ENCODE measurements at regions of chr17 and their contacts with region 1.

Region 1: DNA sequence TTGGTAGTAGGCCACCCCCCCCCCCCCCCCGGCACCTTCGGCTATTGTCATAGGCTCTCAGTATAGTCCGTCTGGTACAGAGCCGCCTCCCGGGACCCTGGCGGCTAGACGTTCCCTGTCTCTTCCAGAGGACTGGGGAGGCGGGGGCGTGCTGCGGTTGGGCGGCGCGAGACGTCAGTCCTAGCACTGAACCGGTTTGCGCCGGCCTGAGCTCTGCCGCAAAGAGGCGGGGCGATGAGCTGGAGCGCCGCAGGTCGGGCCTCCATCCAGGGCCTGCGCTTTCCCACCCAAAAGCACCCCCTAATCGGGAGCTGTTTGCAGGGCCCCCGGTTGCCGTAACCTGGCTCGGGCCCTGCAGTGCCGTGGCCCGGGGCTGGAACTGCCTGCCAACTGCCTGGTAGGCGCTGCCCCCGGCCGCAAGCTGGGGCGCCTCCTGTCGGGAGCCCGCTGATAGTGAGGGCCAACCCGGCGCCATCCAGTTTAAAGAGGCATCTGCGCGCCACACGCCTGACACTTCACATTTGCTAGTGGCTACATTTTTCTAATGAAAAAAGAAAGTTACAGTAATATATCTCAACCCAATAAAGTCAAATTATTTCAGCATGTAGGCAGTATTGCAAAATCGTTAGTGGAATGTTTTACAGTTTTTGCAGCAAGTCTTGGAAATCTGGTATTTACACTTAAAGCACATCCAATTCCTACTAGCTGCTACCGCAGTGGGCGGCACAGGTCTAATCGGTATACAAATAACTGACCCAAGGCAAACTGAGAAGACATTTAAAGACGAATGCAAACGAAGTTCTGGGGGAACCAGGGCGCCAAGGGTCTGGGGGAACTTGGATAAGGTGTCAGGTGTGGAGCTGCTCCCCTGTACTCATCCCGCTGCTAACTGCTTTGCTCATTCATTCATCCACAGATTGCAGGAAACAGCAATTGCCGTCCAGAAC is 748 bp upstream of the USP22 start:
- DNase-seq: peak; percentile 96 to 99 (median 99)
- H3K4me3 ChIP-seq: peak overlapping the region; percentile 43 to 99 (median 80)
- H3K27ac ChIP-seq: peak overlapping the region; percentile 96 to 100 (median 100)
- H3K27me3 ChIP-seq: no peaks in the 10 kb centered on the region
- CTCF ChIP-seq: peak; percentile 69 to 99 (median 92)

Region 2: GRCh38 chr17:20908373-20909273 is 134.9 kb before region 1 on chr17:
- intact Hi-C with region 1: loop called in 1 of 2 experiments (anchors 2 kb)
- DNase-seq: peak; percentile 89 to 96 (median 93)
- H3K4me3 ChIP-seq: peak overlapping the region; percentile 41 to 83 (median 67)
- H3K27ac ChIP-seq: peak overlapping the region; percentile 63 to 99 (median 95)
- H3K27me3 ChIP-seq: no peaks in the 10 kb centered on the region
- CTCF ChIP-seq: peak; percentile 29 to 81 (median 68)

Region 3: GRCh38 chr17:21007646-21008045 is 35.9 kb before region 1 on chr17:
- intact Hi-C with region 1: loop called (anchors 5 kb)
- DNase-seq: peak in 4 of 10 donors; percentile 37 to 71 (median 58)
- H3K4me3 ChIP-seq: peak overlapping the region in 23 of 59 donors; percentile 0 to 39 (median 17)
- H3K27ac ChIP-seq: peak overlapping the region; percentile 35 to 99 (median 94)
- H3K27me3 ChIP-seq: no peaks in the 10 kb centered on the region
- CTCF ChIP-seq: peak in 6 of 56 donors; percentile 3 to 31 (median 23)

Region 4: DNA sequence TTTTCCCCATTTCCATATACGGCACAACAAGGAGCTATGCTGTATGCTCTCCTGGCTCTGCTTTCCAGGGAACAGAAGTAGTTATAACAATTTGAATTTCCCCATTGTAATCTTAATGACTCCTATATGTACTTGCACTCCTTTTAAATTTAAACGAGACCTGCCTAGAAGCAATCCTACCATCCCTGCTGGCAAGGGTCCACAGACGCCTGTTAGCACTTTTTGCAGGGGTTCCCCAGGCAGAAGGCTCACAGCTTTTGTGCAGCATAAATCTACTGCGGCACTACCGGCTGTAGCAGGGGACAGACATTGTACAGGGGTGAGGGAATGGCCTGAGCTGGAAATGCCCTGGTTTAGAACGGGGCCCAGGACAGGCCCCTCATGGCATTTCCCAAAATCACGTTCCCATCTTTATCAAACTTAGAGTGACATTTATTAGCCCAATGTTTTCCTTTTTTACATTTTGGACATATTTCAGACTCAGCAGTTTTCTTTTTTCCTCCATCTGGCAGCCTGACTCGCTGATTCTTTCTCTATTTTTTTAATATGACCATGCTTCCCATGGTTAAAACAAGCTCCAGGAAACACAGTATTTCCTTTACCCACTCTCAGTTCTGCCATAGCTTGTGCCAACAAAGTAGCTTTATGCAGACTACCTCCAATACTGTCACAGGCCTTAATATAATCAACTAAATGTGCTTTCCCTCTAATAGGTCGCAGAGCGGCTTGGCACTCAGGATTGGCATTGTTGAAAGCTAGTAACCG is 34.6 kb after region 1 on chr17:
- intact Hi-C with region 1: loop called (anchors 2 to 5 kb)
- DNase-seq: peak in 1 of 10 donors; percentile 65
- H3K4me3 ChIP-seq: peak overlapping the region in 40 of 59 donors; percentile 1 to 57 (median 21)
- H3K27ac ChIP-seq: peak overlapping the region in 39 of 59 donors; percentile 8 to 88 (median 44)
- H3K27me3 ChIP-seq: no peaks in the 10 kb centered on the region
- CTCF ChIP-seq: no peak

Region 5: DNA sequence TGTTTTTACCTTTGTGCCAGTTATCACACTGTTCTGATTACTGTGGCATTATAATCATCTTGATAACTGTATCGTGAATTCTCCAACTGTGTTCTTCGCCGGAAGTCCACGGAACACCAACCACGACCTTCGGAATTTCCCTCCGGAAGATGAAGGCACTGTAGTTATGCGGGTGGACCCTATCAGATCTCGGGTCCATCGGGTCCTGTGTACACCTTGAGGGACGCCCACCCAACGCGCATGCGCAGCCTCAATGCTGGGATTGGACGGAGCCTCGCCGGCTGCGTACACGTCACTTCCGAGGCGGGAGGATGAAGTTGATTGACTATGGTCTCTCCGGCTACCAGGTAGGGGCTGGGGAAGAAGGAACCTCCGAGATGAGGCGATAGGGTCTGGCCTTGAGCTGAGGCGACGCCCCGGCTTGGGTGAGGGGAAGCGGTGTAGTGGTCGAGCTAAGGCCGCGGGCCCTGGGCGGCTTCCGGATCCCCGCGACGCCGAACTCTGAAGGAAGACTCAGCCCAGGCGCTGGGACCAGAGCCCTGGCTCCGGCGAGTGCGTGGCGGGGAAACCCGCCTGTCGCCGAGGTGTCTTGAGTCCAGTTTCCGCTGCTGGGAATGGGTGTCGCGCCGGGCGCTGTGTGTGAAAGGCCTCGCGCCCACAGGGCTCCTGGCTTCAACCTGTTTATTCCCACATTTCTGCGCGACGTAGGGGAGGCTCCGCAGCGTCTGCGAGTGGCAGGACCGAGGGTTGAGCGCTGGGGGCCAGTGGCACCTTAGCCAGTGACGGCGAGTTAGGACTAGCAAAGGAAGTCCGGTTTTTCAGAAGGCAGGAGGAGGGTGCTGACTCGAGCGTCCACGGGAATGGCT is 83.3 kb after region 1 on chr17 and contains the start of gene DHRS7B:
- intact Hi-C with region 1: loop called (anchors 5 kb)
- DNase-seq: peak; percentile 92 to 98 (median 96)
- H3K4me3 ChIP-seq: peak within 1 kb of the TSS; percentile 64 to 100 (median 90)
- H3K27ac ChIP-seq: peak within 1 kb of the TSS in 58 of 59 donors; percentile 15 to 94 (median 74)
- H3K27me3 ChIP-seq: no peaks in the 10 kb centered on the region
- CTCF ChIP-seq: peak in 21 of 56 donors; percentile 10 to 48 (median 21)
- total RNA-seq, gene DHRS7B: 13.4 to 31.5 (median 21.3) TPM

Region 6: GRCh38 chr17:21161498-21162393 is 118.2 kb after region 1 on chr17:
- intact Hi-C with region 1: no loop called
- DNase-seq: no peak
- H3K4me3 ChIP-seq: peak overlapping the region in 1 of 59 donors; percentile 5
- H3K27ac ChIP-seq: peak overlapping the region in 40 of 59 donors; percentile 1 to 79 (median 46)
- H3K27me3 ChIP-seq: no peaks in the 10 kb centered on the region
- CTCF ChIP-seq: no peak

Region 7: GRCh38 chr17:21275579-21276263 is 232.2 kb after region 1 on chr17:
- intact Hi-C with region 1: loop called in 1 of 2 experiments (anchors 5 kb)
- DNase-seq: peak; percentile 92 to 98 (median 96)
- H3K4me3 ChIP-seq: peak overlapping the region; percentile 48 to 98 (median 79)
- H3K27ac ChIP-seq: peak overlapping the region in 50 of 59 donors; percentile 0 to 90 (median 72)
- H3K27me3 ChIP-seq: no peaks in the 10 kb centered on the region
- CTCF ChIP-seq: peak in 40 of 56 donors; percentile 5 to 58 (median 26)

Measured in dorsolateral prefrontal cortex (tissue), 120 donors.